IMR-90 (cell line): ENCODE measurements at regions of chr5 and their contacts with region 1.

Region 1: DNA sequence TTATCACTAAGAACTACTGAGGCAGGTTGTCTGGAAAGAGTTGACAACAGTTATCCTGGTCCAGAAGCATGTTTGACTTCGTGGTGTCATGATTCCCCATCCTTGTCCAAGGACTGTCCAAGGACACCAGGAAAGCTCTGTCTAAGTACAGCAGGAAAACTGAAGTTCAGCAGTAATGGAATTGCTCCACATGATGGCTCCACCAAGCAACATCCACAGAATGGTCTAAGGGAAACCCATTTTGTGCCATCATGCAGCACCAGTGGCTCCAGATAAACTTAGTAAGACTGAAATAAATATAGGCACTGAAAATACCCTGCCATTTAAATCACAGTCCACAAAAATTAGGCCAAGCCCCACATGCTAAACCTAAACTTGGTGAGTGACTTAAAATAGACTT is 192.8 kb downstream of the CDH18 start:
- DNase-seq: peak; percentile 57
- ATAC-seq: peak; percentile 84
- H3K4me3 ChIP-seq: no peak overlapping the region
- H3K27ac ChIP-seq: no peak overlapping the region
- H3K4me1 ChIP-seq: no peaks in the 10 kb centered on the region
- H3K27me3 ChIP-seq: no peaks in the 10 kb centered on the region
- CTCF ChIP-seq: peak; percentile 56
- POLR2A ChIP-seq: no peak
- RAD21 ChIP-seq: peak; percentile 72

Region 2: GRCh38 chr5:20229301-20230005 is 434.2 kb after region 1 on chr5:
- CTCF ChIA-PET with region 1: no interaction called
- POLR2A ChIA-PET with region 1: no interaction called
- dilution Hi-C with region 1: no loop called
- in situ Hi-C with region 1: no loop called
- intact Hi-C with region 1: loop called (anchors 10 kb)
- DNase-seq: no peak
- ATAC-seq: no peak
- H3K4me3 ChIP-seq: no peak overlapping the region
- H3K27ac ChIP-seq: no peak overlapping the region
- H3K4me1 ChIP-seq: no peaks in the 10 kb centered on the region
- H3K27me3 ChIP-seq: no peaks in the 10 kb centered on the region
- CTCF ChIP-seq: no peak
- POLR2A ChIP-seq: no peak
- RAD21 ChIP-seq: no peak